ENCODE measurements at regions of chr19 and their contacts with region 1.

Region 1: GRCh38 chr19:872266-872951 is 12.9 kb downstream of the CFD start:
- DNase-seq: peak in 3 of 5 donors; percentile 43 to 77 (median 67)
- ATAC-seq: peak in 2 of 4 donors; percentile 15 to 52
- H3K4me3 ChIP-seq: peak overlapping the region in 1 of 12 donors; percentile 15
- H3K27ac ChIP-seq: peak overlapping the region in 4 of 12 donors; percentile 5 to 64 (median 50)
- H3K4me1 ChIP-seq: peaks cover 0 to 28% (median 8%) of the 10 kb centered on the region in 12 donors
- H3K27me3 ChIP-seq: no peaks in the 10 kb centered on the region
- CTCF ChIP-seq: no peak
- POLR2A ChIP-seq: no peak

Region 2: GRCh38 chr19:913080-913748 is 40.8 kb after region 1 on chr19 and contains the start of gene R3HDM4:
- intact Hi-C with region 1: loop called in 5 of 10 experiments (anchors 5 kb)
- DNase-seq: peak; percentile 84 to 93 (median 87)
- ATAC-seq: peak; percentile 79 to 95 (median 90)
- H3K4me3 ChIP-seq: peak within 1 kb of the TSS; percentile 72 to 99 (median 88)
- H3K27ac ChIP-seq: peak within 1 kb of the TSS in 11 of 12 donors; percentile 80 to 97 (median 92)
- H3K4me1 ChIP-seq: peaks cover 7 to 56% (median 19%) of the 10 kb centered on the region in 12 donors
- H3K27me3 ChIP-seq: peaks cover 13 to 23% (median 18%) of the 10 kb centered on the region in 9 donors
- CTCF ChIP-seq: no peak
- POLR2A ChIP-seq: peak in 1 of 2 donors; percentile 51
- total RNA-seq, gene R3HDM4: 17.1 to 35.5 (median 23.8) TPM

Region 3: DNA sequence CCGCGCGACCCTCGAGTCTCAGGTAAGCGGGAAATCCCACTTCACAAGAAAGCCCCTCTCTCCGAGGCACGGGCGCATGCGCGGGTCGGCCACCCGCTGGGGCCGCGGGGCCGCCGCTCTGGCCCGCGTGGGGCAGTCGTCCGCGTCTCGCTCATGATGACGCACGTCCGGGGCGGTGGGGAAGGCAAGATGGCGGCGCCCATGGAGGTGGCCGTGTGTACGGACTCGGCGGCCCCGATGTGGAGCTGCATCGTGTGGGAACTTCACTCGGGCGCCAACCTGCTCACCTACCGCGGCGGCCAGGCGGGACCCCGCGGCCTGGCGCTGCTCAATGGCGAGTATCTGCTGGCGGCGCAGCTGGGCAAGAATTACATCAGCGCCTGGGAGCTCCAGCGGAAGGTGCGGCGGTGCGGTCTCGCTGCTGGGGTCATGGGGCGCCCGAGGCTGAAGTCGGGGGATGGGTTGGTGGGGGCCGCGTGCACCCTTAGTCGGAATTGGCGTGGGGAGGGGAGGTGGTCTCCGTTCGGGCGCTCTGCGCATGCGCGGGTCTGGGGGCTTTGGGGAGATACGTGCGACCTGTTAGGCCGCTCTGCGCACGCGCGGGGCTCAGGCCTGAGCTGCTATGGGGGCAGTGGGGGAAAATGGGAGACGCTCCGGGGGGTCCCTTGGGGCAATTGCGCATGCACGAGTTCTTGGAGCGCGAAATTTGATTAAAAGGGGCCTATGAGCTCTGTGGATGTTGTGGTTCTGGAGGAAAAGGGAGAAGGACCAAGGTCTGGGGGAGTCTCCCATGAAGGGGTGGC is 112.0 kb after region 1 on chr19 and contains the start of gene WDR18:
- intact Hi-C with region 1: loop called in 2 of 10 experiments (anchors 5 to 10 kb)
- DNase-seq: peak; percentile 94 to 97 (median 94)
- ATAC-seq: peak; percentile 87 to 97 (median 96)
- H3K4me3 ChIP-seq: peak within 1 kb of the TSS; percentile 80 to 100 (median 91)
- H3K27ac ChIP-seq: peak within 1 kb of the TSS; percentile 67 to 92 (median 86)
- H3K4me1 ChIP-seq: peaks cover 3 to 38% (median 19%) of the 10 kb centered on the region in 12 donors
- H3K27me3 ChIP-seq: no peaks in the 10 kb centered on the region
- CTCF ChIP-seq: peak in 8 of 12 donors; percentile 11 to 50 (median 34)
- POLR2A ChIP-seq: peak in 1 of 2 donors; percentile 57
- total RNA-seq, gene WDR18: 15.6 to 36.3 (median 19.2) TPM

Measured in heart left ventricle (tissue), 16 donors.